ENCODE measurements at regions of chr6 and their contacts with region 1.

Region 1: DNA sequence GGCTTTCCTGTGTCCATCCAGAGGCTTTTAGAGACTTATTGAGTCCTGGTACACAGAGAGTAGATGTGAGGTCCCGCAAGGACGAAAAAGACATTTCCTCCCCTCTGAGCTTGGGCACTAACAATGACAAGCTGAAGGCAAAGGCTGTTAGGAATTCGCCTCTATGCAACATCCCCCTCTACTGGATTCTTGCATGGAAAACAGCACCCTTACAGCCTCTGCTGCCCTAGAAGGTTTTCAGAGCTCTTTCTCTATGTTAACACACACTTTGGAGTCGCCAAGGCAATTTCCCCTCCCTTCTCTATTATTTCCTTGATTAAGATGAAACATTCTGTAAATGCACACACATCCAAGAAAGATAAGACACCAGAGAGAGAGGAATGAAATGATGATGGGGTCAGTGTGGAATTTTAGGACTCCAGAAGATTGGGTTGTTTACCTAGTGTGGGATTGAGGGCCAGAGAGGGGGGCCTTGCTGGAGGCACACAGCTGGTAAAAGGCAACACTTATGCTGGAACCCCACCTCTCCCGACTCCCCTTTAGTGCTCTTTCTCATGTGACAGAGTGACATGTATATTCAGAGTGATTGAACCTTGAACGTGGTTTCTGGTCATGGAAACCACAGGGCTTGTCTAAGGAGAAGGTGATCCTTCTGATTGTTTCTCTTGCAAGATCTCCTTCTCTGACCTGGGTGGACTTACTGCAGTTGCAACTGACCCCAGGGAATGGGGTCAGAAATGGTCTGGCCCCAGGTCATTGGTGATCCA is 300.7 kb downstream of the CLIC5 start:
- DNase-seq: peak; percentile 59
- H3K4me3 ChIP-seq: no peak overlapping the region
- H3K27ac ChIP-seq: peak overlapping the region in 1 of 4 donors; percentile 3
- H3K4me1 ChIP-seq: peaks cover 0 to 7% (median 2%) of the 10 kb centered on the region in 4 donors
- H3K27me3 ChIP-seq: no peaks in the 10 kb centered on the region
- CTCF ChIP-seq: peak; percentile 74 to 79 (median 78)
- EP300 ChIP-seq: no peak
- POLR2A ChIP-seq: no peak

Region 2: DNA sequence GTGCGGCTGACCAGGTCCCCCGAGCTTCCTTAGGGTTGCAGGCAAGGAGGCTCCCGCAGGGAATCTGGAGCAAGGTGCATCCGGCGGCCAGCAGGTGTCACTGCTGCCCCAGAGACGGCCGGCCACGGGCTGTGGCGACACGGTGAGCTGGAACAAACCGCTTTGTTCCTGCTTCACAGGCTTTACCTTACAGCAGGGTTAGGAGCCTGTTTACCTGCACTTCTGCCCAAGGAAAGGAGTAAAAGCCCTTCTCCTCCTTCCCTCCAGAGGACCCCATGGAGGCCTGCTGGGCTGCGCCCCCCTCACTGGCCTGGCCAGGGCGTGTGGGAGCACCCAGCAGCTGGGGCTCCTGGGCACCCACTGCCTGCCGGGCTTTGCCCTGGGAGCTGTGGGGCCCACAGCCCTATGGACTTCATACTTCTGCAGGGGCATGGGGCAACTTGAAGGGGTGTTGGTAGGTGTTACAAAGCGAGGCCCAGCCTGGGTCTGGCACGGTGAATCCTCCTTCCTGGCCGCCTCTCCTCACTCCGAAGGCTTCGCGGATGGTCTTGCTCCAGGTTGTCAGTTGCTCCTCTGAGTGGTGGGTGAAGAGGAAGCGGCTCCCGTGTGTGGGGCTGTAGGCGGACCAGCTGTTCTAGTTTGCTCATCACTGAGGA is 1239.0 kb before region 1 on chr6:
- in situ Hi-C with region 1: loop called in 2 of 4 experiments (anchors 10 to 25 kb)
- intact Hi-C with region 1: no loop called
- DNase-seq: peak; percentile 81
- H3K4me3 ChIP-seq: no peak overlapping the region
- H3K27ac ChIP-seq: no peak overlapping the region
- H3K4me1 ChIP-seq: peaks cover 0 to 6% (median 3%) of the 10 kb centered on the region in 4 donors
- H3K27me3 ChIP-seq: peaks cover 3% of the 10 kb centered on the region
- CTCF ChIP-seq: peak; percentile 87 to 89 (median 88)
- EP300 ChIP-seq: no peak
- POLR2A ChIP-seq: no peak

Region 3: GRCh38 chr6:44655412-44656342 is 1059.2 kb before region 1 on chr6:
- in situ Hi-C with region 1: loop called (anchors 5 to 25 kb)
- intact Hi-C with region 1: loop called (anchors 10 kb)
- DNase-seq: peak; percentile 78
- H3K4me3 ChIP-seq: no peak overlapping the region
- H3K27ac ChIP-seq: no peak overlapping the region
- H3K4me1 ChIP-seq: peaks cover 0 to 16% (median 4%) of the 10 kb centered on the region in 4 donors
- H3K27me3 ChIP-seq: no peaks in the 10 kb centered on the region
- CTCF ChIP-seq: peak; percentile 84 to 96 (median 91)
- EP300 ChIP-seq: peak; percentile 73
- POLR2A ChIP-seq: no peak

Region 4: GRCh38 chr6:44667668-44668390 is 1047.1 kb before region 1 on chr6:
- in situ Hi-C with region 1: loop called in 2 of 4 experiments (anchors 10 to 25 kb)
- intact Hi-C with region 1: no loop called
- DNase-seq: peak; percentile 41
- H3K4me3 ChIP-seq: no peak overlapping the region
- H3K27ac ChIP-seq: no peak overlapping the region
- H3K4me1 ChIP-seq: no peaks in the 10 kb centered on the region
- H3K27me3 ChIP-seq: no peaks in the 10 kb centered on the region
- CTCF ChIP-seq: peak; percentile 35 to 61 (median 55)
- EP300 ChIP-seq: no peak
- POLR2A ChIP-seq: no peak

Region 5: GRCh38 chr6:44762496-44762895 is 952.4 kb before region 1 on chr6:
- in situ Hi-C with region 1: no loop called
- intact Hi-C with region 1: no loop called
- DNase-seq: no peak
- H3K4me3 ChIP-seq: no peak overlapping the region
- H3K27ac ChIP-seq: no peak overlapping the region
- H3K4me1 ChIP-seq: no peaks in the 10 kb centered on the region
- H3K27me3 ChIP-seq: no peaks in the 10 kb centered on the region
- CTCF ChIP-seq: no peak
- EP300 ChIP-seq: no peak
- POLR2A ChIP-seq: no peak

Region 6: GRCh38 chr6:45421709-45422502 is 293.0 kb before region 1 on chr6:
- in situ Hi-C with region 1: loop called in 3 of 4 experiments (anchors 10 to 25 kb)
- intact Hi-C with region 1: loop called (anchors 5 kb)
- DNase-seq: peak; percentile 66
- H3K4me3 ChIP-seq: peak overlapping the region; percentile 29 to 64 (median 43)
- H3K27ac ChIP-seq: peak overlapping the region; percentile 77 to 85 (median 82)
- H3K4me1 ChIP-seq: peaks cover 0 to 44% (median 32%) of the 10 kb centered on the region in 4 donors
- H3K27me3 ChIP-seq: peaks cover 84% of the 10 kb centered on the region
- CTCF ChIP-seq: peak in 1 of 5 experiments; percentile 14
- EP300 ChIP-seq: no peak
- POLR2A ChIP-seq: peak; percentile 24

Region 7: DNA sequence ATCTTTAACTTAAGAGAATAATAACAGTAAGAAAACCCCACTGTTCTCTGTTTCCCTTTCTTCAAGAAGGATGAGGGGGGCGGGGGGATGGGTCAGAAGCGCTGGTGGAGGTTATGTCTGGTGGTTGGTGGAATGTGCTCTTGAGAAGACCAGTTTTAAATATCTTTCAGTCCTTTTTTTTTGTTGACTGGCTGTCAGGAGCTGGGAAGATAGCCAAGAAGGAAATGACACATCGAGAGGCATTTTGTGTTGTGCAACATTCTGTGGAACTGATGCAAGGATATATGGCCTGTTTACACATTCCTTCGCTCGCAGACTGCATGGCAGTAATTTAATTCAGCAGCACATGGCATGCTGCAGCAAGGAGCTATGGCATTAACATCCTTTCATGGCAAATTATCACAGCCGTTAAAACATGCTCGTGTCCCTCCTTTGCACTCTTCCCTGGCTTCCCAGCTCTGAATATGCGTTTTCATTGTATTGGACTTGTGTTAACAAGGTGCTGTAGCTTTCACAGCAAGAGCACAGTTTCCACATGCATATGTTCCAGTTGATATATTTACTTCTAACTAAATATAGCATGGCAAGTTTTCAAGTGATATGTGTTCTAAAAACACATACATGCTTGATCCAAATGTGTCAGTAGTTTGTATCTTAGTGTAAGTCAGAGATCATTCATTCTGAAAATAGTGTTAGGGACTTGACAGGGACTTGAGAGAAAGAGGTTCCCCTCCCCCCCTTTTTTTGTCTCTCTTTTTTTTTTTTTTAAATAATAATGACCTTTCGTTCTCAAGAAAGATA is 269.0 kb before region 1 on chr6:
- in situ Hi-C with region 1: loop called in 2 of 4 experiments (anchors 25 kb)
- intact Hi-C with region 1: no loop called
- DNase-seq: peak; percentile 66
- H3K4me3 ChIP-seq: no peak overlapping the region
- H3K27ac ChIP-seq: peak overlapping the region; percentile 60 to 76 (median 70)
- H3K4me1 ChIP-seq: peaks cover 9 to 34% (median 20%) of the 10 kb centered on the region in 4 donors
- H3K27me3 ChIP-seq: no peaks in the 10 kb centered on the region
- CTCF ChIP-seq: no peak
- EP300 ChIP-seq: peak; percentile 74
- POLR2A ChIP-seq: no peak

Measured in transverse colon (tissue), 4 donors.